Activated naive CD4-positive, alpha-beta T cell treated with anti-CD3 and anti-CD28 coated beads for 36 hours (primary cell): ENCODE measurements at regions of chr7 and their contacts with region 1.

Region 1: DNA sequence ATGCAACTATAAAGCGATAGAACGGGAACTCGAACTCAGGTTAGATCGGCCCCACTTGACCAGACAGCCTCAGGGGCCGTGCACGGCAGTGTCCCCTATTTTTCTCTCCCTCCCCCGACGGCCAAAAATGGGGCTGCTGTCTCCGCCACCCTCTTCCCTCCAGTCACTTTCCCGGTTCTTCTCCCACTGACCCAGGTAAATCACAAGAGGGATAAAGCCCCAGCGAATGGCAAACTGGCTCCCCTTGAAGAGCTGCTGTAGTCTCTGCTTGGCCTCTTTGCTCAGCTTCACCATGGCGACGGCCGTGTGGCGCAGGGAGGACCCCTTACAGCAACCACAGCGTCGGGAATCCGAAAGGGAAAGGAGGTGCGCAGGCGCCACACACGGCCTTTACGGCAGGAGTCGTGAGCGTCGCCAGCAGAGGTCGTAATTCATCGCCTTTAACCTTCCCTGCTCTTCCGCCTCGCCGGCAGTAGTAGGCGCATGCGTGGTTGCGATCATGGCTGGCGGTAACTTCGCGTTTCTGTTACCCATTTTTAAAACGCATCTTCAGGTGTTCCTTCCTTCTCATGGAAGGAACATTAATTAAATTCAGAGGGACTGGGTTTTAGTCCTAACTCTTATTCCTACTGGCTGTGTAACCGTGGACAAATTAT is at the start of gene TOMM7:
- DNase-seq: peak; percentile 92
- H3K4me3 Mint-ChIP-seq: peak within 1 kb of the TSS; percentile 99
- H3K27ac Mint-ChIP-seq: peak within 1 kb of the TSS; percentile 96
- H3K4me1 Mint-ChIP-seq: peaks cover 36% of the 10 kb centered on the region
- H3K27me3 Mint-ChIP-seq: peaks cover 10% of the 10 kb centered on the region
- total RNA-seq, gene TOMM7: 269 to 297 TPM

Region 2: GRCh38 chr7:22559829-22560489 is 262.7 kb before region 1 on chr7:
- CTCF ChIA-PET with region 1: interaction called, 4 read pairs
- intact Hi-C with region 1: loop called (anchors 1 kb)
- DNase-seq: peak; percentile 81
- H3K4me3 Mint-ChIP-seq: no peak overlapping the region
- H3K27ac Mint-ChIP-seq: no peak overlapping the region
- H3K4me1 Mint-ChIP-seq: peaks cover 28% of the 10 kb centered on the region
- H3K27me3 Mint-ChIP-seq: peaks cover 7% of the 10 kb centered on the region

Region 3: GRCh38 chr7:22751341-22751740 is 71.3 kb before region 1 on chr7:
- CTCF ChIA-PET with region 1: no interaction called
- intact Hi-C with region 1: no loop called
- DNase-seq: no peak
- H3K4me3 Mint-ChIP-seq: no peak overlapping the region
- H3K27ac Mint-ChIP-seq: no peak overlapping the region
- H3K4me1 Mint-ChIP-seq: no peaks in the 10 kb centered on the region
- H3K27me3 Mint-ChIP-seq: peaks cover 4% of the 10 kb centered on the region

Region 4: GRCh38 chr7:22854158-22855048 is 31.8 kb after region 1 on chr7:
- CTCF ChIA-PET with region 1: no interaction called
- intact Hi-C with region 1: loop called (anchors 1 kb)
- DNase-seq: peak; percentile 78
- H3K4me3 Mint-ChIP-seq: peak overlapping the region; percentile 87
- H3K27ac Mint-ChIP-seq: peak overlapping the region; percentile 94
- H3K4me1 Mint-ChIP-seq: peaks cover 32% of the 10 kb centered on the region
- H3K27me3 Mint-ChIP-seq: peaks cover 3% of the 10 kb centered on the region

Region 5: GRCh38 chr7:23020742-23021401 is 198.3 kb after region 1 on chr7:
- CTCF ChIA-PET with region 1: no interaction called
- intact Hi-C with region 1: loop called (anchors 1 kb)
- DNase-seq: peak; percentile 43
- H3K4me3 Mint-ChIP-seq: no peak overlapping the region
- H3K27ac Mint-ChIP-seq: peak overlapping the region; percentile 72
- H3K4me1 Mint-ChIP-seq: peaks cover 25% of the 10 kb centered on the region
- H3K27me3 Mint-ChIP-seq: peaks cover 9% of the 10 kb centered on the region

Region 6: DNA sequence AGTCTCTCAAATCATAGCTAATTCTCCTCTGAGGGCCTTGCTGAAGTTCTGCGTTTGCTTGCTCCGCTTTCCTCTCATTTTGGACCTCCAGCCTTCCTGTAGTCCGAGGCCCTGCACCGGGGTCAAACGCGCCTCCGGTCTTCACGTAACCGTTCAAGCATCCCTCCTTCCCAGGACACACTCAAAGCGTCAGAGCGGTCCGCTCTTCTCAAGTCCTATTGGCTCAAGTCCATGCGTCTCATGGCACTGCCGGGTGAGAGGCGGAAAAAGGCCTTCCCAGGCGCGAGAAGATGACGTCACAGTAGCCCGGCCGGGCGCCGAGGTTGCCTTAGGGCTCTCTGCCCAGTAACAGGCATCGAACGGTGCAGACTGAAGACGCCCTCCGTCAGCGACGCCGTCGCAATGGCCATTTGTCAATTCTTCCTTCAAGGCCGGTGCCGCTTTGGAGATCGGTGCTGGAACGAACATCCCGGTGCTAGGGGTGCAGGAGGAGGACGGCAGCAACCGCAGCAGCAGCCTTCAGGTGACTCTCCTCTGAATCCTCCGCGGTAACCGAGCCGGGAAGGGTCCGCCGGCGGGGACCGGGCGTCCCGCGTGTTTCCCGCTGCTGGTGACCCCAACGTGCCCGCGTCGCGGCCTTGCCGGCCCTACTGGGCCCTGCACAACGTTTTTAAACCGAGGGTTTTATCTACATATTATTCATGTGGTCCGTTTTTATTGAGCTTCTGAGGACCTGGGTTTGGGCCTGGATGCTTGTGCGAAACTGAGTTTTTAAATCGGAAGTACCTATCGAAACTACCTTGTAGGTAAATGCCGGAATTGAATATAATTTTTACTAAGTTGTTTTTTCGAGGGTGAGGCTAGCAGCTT is 359.3 kb after region 1 on chr7 and contains the start of gene NUP42:
- CTCF ChIA-PET with region 1: no interaction called
- intact Hi-C with region 1: loop called (anchors 1 kb)
- DNase-seq: peak; percentile 98
- H3K4me3 Mint-ChIP-seq: peak within 1 kb of the TSS; percentile 99
- H3K27ac Mint-ChIP-seq: peak within 1 kb of the TSS; percentile 99
- H3K4me1 Mint-ChIP-seq: peaks cover 35% of the 10 kb centered on the region
- H3K27me3 Mint-ChIP-seq: no peaks in the 10 kb centered on the region
- total RNA-seq, gene NUP42: 15.2 to 17.0 TPM